PC-9 (cell line): ENCODE measurements at regions of chr12 and their contacts with region 1.

Region 1: DNA sequence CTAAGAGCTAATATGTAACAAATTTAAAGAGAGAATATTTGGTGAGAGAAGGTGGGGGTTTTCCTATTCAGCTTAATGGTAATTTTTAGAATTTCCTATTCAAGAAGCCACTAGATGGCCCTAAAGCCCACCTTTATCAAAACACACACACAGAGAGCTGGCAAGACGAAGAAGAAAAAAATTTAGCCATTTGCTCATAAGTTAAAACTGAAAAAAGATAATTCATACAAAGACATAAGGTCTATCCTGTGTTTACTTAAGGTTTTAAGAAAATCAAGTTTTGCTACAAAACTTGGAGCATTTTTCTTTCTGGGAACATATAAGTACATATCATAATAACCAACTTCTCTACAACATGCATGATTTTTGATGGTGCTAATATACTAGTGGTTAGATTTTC is 46.8 kb upstream of the PCED1B start:
- DNase-seq: peak in 1 of 2 experiments; percentile 58
- H3K4me3 ChIP-seq: no peak overlapping the region
- H3K27ac ChIP-seq: peak overlapping the region; percentile 90
- H3K4me1 ChIP-seq: peaks cover 38% of the 10 kb centered on the region
- H3K27me3 ChIP-seq: no peaks in the 10 kb centered on the region
- CTCF ChIP-seq: peak; percentile 79

Region 2: GRCh38 chr12:45794422-45794821 is 1238.2 kb before region 1 on chr12:
- CTCF ChIA-PET with region 1: no interaction called
- POLR2A ChIA-PET with region 1: no interaction called
- intact Hi-C with region 1: no loop called
- DNase-seq: no peak
- H3K4me3 ChIP-seq: no peak overlapping the region
- H3K27ac ChIP-seq: no peak overlapping the region
- H3K4me1 ChIP-seq: no peaks in the 10 kb centered on the region
- H3K27me3 ChIP-seq: no peaks in the 10 kb centered on the region
- CTCF ChIP-seq: no peak

Region 3: DNA sequence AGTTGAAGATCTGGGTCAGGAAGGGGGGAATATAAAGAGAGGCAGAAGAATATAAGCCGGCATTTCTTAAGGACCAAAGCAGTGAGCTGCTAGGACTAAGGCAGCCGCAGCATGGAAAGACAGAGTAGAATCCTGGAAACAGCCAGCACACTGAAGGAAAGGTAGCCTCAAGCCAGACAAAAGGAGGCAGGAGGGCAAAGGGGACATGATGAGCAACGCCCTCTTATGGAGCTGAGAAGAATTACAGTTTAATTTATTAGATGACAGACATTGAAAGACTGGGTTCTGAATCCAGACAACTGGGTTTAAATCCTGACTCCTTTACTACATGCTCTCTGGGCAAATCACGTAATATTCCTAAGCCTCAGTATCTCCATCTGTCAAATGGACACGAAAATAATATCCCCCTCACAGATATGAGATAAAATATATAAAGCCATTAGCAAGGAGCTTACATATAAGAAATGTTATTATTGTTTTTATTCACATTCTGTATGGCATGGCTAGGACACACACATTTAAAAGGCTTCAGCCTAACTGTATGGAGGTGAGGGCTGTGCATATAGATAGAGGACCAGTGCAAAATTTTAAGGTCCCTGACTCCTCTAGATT is 38.7 kb after region 1 on chr12:
- CTCF ChIA-PET with region 1: interaction called, 10 read pairs
- POLR2A ChIA-PET with region 1: interaction called, 3 read pairs
- intact Hi-C with region 1: no loop called
- DNase-seq: no peak
- H3K4me3 ChIP-seq: no peak overlapping the region
- H3K27ac ChIP-seq: no peak overlapping the region
- H3K4me1 ChIP-seq: peaks cover 10% of the 10 kb centered on the region; the same call in 1 of the 2 replicates
- H3K27me3 ChIP-seq: no peaks in the 10 kb centered on the region
- CTCF ChIP-seq: peak; percentile 70

Region 4: GRCh38 chr12:47095446-47096236 is 63.0 kb after region 1 on chr12:
- CTCF ChIA-PET with region 1: interaction called, 3 read pairs
- POLR2A ChIA-PET with region 1: interaction called, 4 read pairs
- intact Hi-C with region 1: loop called (anchors 1 kb)
- DNase-seq: peak; percentile 34 to 84
- H3K4me3 ChIP-seq: no peak overlapping the region; the same call in 1 of the 2 replicates
- H3K27ac ChIP-seq: peak overlapping the region; percentile 71
- H3K4me1 ChIP-seq: peaks cover 49% of the 10 kb centered on the region
- H3K27me3 ChIP-seq: no peaks in the 10 kb centered on the region
- CTCF ChIP-seq: no peak

Region 5: DNA sequence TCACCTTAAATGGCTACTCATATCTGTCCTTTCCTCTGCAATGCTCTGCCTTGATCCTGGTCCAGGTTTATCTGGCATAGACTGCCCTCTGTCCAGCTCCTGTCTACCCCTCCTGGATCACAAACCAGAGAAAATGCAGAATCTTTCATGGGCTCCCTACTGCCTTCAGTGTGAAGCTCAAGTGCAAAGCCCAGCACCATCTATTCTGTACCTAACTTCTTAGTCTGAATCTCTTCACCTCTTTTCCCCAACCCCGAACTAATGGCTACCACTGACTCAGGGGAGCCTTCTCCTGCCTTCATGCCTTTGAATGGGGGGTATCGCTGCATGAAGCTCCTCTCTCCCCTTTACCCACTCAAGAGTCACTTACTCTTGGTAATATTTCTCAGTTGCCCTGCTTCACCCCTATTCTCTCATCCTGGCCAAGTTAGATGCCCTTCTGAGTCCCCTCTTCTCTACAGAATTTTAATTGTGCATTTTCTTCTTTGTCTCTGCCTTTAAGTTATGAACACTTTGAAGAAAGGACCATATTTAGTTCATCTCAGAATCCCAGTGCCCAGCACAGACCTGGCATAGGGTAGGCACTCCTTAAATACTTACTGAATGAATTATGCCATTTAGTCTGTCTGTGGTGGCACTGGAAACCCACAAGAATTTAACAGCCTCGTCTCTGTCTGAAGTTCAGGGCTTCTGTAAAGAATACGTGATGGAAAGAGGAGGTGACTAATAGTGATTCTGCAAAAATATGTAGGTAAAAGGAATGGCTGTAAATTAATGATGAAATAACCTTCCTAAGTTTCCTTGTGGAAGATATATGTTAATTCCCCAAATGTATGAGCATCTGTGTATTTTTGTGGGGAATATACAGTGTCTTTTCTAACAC is 238.4 kb after region 1 on chr12:
- CTCF ChIA-PET with region 1: interaction called, 4 read pairs
- POLR2A ChIA-PET with region 1: interaction called, 4 read pairs
- intact Hi-C with region 1: loop called (anchors 1 kb)
- DNase-seq: peak; percentile 70 to 99
- H3K4me3 ChIP-seq: peak overlapping the region; percentile 41; the same call in 1 of the 2 replicates
- H3K27ac ChIP-seq: peak overlapping the region; percentile 100
- H3K4me1 ChIP-seq: peaks cover 76% of the 10 kb centered on the region
- H3K27me3 ChIP-seq: no peaks in the 10 kb centered on the region
- CTCF ChIP-seq: no peak

Region 6: DNA sequence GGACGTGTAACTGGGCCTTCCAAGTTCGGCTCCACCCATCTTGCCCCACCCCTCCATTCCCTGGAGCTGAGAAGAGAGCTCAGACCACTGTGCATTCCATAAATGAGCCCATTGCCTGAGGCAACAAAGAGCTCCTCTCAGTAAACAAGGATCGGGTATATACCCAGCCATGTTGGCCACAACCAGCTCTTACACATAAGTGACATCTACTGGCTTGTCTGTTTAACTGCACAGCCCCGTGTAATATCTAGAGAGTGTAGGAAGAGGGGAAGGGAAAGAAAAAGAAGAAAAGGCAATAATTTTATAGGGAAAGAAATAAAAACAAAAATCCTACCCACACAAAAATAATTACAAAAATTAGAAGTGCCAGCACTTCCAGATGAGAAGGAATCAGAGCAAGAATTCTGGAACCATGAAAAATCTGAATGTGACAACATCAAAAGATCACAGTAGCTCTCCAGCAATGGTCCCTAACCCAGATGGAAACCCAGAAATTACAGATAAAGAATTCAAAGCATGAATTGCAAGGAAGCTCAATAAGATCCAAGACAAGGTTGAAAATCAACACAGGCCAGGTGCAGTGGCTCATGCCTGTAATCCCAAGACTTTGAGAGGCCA is 365.1 kb after region 1 on chr12:
- CTCF ChIA-PET with region 1: interaction called, 15 read pairs
- POLR2A ChIA-PET with region 1: no interaction called
- intact Hi-C with region 1: loop called (anchors 1 kb)
- DNase-seq: peak; percentile 57 to 78
- H3K4me3 ChIP-seq: no peak overlapping the region
- H3K27ac ChIP-seq: peak overlapping the region; percentile 25; the same call in 1 of the 2 replicates
- H3K4me1 ChIP-seq: peaks cover 17% of the 10 kb centered on the region
- H3K27me3 ChIP-seq: no peaks in the 10 kb centered on the region
- CTCF ChIP-seq: peak; percentile 77

Region 7: GRCh38 chr12:47473091-47473490 is 440.4 kb after region 1 on chr12:
- CTCF ChIA-PET with region 1: no interaction called
- POLR2A ChIA-PET with region 1: interaction called, 10 read pairs
- intact Hi-C with region 1: no loop called
- DNase-seq: no peak
- H3K4me3 ChIP-seq: no peak overlapping the region
- H3K27ac ChIP-seq: no peak overlapping the region
- H3K4me1 ChIP-seq: no peaks in the 10 kb centered on the region
- H3K27me3 ChIP-seq: peaks cover 9% of the 10 kb centered on the region
- CTCF ChIP-seq: no peak

Region 8: DNA sequence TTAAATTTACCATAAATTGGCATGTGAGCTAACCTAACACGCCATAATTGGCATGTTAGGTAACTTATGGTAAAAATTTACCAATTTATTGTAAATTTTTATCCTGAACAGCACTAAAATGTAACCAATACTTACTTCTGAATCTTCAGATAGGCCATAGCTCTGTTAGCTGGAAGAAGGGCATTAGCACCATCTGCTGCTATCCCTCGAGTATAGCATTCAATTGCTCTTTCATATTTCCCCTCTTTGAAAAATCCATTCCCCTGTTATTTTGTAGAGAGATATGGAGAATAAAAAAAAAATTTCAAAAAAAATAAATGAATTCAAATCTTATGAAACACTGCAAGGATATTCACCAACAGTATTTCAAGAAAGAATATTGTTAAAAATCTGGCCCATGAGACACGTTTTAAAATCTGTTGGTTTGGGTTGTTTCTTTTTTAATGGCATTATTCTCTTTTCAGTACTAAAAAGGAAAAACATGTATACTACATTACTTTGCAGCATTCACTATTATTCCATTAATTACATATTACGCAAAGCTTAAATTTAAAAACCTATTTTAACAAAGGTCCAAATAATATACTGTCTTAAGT is 654.1 kb after region 1 on chr12:
- CTCF ChIA-PET with region 1: interaction called, 3 read pairs
- POLR2A ChIA-PET with region 1: no interaction called
- intact Hi-C with region 1: loop called (anchors 1 kb)
- DNase-seq: peak in 1 of 2 experiments; percentile 38
- H3K4me3 ChIP-seq: no peak overlapping the region
- H3K27ac ChIP-seq: no peak overlapping the region
- H3K4me1 ChIP-seq: no peaks in the 10 kb centered on the region
- H3K27me3 ChIP-seq: no peaks in the 10 kb centered on the region
- CTCF ChIP-seq: peak; percentile 80